Common myeloid progenitor, CD34-positive (primary cell): ENCODE measurements at regions of chr14 and their contacts with region 1.

Region 1: GRCh38 chr14:61719344-61720293 is 24.3 kb downstream of the HIF1A start:
- DNase-seq: peak; percentile 67 to 94 (median 89)
- H3K4me3 ChIP-seq: peak overlapping the region in 6 of 7 experiments; percentile 24 to 56 (median 44)
- H3K27ac ChIP-seq: peak overlapping the region; percentile 84 to 85
- H3K4me1 ChIP-seq: peaks cover 34 to 71% (median 44%) of the 10 kb centered on the region in 4 experiments
- H3K27me3 ChIP-seq: no peaks in the 10 kb centered on the region

Region 2: DNA sequence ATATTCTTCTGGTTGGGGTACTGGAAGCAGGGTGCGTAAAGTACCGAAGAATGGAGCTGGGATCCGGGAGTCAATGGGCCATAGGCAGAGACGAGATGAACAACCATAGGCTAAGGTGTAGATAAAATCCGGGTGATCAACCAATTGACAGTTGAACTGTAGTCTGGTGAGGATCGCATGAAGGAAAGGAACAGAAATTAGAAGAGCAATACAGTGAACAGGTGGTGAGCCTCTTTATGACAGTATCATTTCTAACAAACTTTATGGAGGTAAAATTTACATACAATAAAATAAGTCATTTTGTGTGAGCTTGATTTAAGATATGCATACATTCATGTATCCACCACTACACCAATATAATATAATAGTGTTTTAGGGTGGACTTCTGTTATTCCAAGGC is 38.2 kb before region 1 on chr14:
- CTCF ChIA-PET with region 1: no interaction called
- POLR2A ChIA-PET with region 1: no interaction called
- DNase-seq: no peak
- H3K4me3 ChIP-seq: no peak overlapping the region
- H3K27ac ChIP-seq: no peak overlapping the region
- H3K4me1 ChIP-seq: peaks cover 4 to 18% (median 6%) of the 10 kb centered on the region in 4 experiments
- H3K27me3 ChIP-seq: no peaks in the 10 kb centered on the region

Region 3: GRCh38 chr14:61698206-61698980 is 21.2 kb before region 1 on chr14:
- CTCF ChIA-PET with region 1: interaction called, 11 read pairs
- POLR2A ChIA-PET with region 1: interaction called, 8 read pairs
- DNase-seq: peak in 2 of 3 donors; percentile 34 to 47
- H3K4me3 ChIP-seq: peak overlapping the region in 6 of 7 experiments; percentile 47 to 99 (median 98)
- H3K27ac ChIP-seq: peak overlapping the region in 1 of 2 experiments; percentile 90
- H3K4me1 ChIP-seq: peaks cover 16 to 44% (median 36%) of the 10 kb centered on the region in 4 experiments
- H3K27me3 ChIP-seq: no peaks in the 10 kb centered on the region

Region 4: GRCh38 chr14:61703342-61704129 is 16.1 kb before region 1 on chr14:
- CTCF ChIA-PET with region 1: interaction called, 17 read pairs
- POLR2A ChIA-PET with region 1: interaction called, 8 read pairs
- DNase-seq: no peak
- H3K4me3 ChIP-seq: peak overlapping the region in 1 of 7 experiments; percentile 2
- H3K27ac ChIP-seq: no peak overlapping the region
- H3K4me1 ChIP-seq: peaks cover 5 to 26% (median 22%) of the 10 kb centered on the region in 4 experiments
- H3K27me3 ChIP-seq: no peaks in the 10 kb centered on the region

Region 5: DNA sequence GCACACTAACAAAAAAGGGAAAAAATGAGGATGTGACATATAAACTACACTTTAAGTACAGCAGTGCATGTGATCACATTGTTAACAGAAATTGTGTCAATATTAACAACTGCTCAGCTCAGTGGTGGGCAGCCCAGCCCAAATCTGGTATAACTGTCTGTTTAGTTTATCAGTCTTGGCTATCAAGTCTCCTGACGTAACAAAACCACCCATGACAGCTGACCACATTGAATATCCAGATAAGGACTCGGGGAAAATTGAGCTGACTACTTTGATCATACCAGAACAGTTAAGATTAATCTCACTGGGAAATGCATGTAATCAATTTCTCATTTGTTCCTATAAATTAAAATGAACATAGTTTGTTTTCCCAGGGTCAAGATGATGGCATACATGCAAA is 439.2 kb after region 1 on chr14:
- CTCF ChIA-PET with region 1: no interaction called
- POLR2A ChIA-PET with region 1: no interaction called
- DNase-seq: peak; percentile 7 to 34 (median 30)
- H3K4me3 ChIP-seq: no peak overlapping the region
- H3K27ac ChIP-seq: no peak overlapping the region
- H3K4me1 ChIP-seq: no peaks in the 10 kb centered on the region
- H3K27me3 ChIP-seq: peaks cover 4 to 12% (median 8%) of the 10 kb centered on the region in 5 experiments